CD14-positive monocyte (primary cell): ENCODE measurements at regions of chr1 and their contacts with region 1.

Region 1: GRCh38 chr1:236103646-236104218 is 38.6 kb upstream of the GPR137B start:
- DNase-seq: peak; percentile 50 to 58 (median 56)
- H3K4me3 ChIP-seq: no peak overlapping the region
- H3K4me3 Mint-ChIP-seq: peak overlapping the region in 1 of 2 donors; percentile 36
- H3K27ac ChIP-seq: no peak overlapping the region
- H3K27ac Mint-ChIP-seq: peak overlapping the region in 1 of 7 donors; percentile 14
- H3K4me1 ChIP-seq: peaks cover 0 to 2% of the 10 kb centered on the region in 2 donors
- H3K4me1 Mint-ChIP-seq: peaks cover 4% of the 10 kb centered on the region
- H3K27me3 ChIP-seq: no peaks in the 10 kb centered on the region
- H3K27me3 Mint-ChIP-seq: peaks cover 0 to 2% (median 2%) of the 10 kb centered on the region in 3 donors
- CTCF ChIP-seq: peak; percentile 82

Region 2: DNA sequence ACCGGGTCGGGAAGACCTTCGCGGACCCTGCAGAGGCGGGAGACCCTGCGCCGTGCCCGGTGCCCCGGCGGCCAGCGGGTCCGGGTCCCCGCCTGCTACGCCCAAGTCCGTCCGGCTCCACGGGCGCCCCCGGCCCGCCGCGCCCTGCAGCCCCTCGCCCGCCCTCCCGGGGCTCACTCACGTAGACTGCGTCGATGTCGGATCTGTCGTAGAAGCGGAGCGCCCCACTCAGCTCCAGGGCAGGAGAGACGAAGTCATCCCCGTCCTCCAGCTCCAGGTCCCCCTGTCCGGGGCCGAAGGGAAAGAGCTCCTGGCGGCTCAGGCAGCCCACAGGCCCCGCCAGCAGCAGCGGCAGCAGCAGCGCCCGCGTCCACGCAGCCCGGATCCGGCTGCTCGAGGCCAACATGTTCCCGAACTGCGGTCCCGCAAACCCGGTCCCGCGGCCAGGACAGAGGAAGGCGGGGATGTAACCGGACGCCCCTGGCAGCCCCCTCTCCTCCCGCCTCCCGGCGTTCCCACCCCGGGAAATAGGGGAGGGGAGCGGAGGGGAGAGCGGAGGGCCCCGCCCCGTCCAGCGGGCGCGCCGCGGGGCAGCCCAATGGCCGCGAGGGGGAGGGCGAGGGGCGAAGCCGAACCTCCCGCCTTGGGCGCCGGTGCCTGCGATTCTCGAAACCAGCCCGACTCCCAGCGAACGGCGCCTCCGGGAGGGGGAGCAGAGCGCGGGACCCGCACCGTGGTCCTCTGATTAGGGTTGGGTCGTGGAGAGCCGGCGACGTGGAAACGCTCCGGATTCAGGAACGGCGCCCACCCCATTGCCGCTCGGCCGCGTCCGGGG is 38.8 kb before region 1 on chr1 and contains the start of gene NID1:
- intact Hi-C with region 1: loop called in 1 of 2 experiments (anchors 5 kb)
- DNase-seq: peak; percentile 44 to 56 (median 51)
- H3K4me3 ChIP-seq: peak within 1 kb of the TSS; percentile 67 to 82 (median 68)
- H3K4me3 Mint-ChIP-seq: peak within 1 kb of the TSS; percentile 87 to 92
- H3K27ac ChIP-seq: peak within 1 kb of the TSS; percentile 31 to 88
- H3K27ac Mint-ChIP-seq: peak within 1 kb of the TSS in 6 of 7 donors; percentile 14 to 91 (median 72)
- H3K4me1 ChIP-seq: peaks cover 37 to 52% of the 10 kb centered on the region in 2 donors
- H3K4me1 Mint-ChIP-seq: peaks cover 35% of the 10 kb centered on the region
- H3K27me3 ChIP-seq: peaks cover 4 to 13% of the 10 kb centered on the region in 2 donors
- H3K27me3 Mint-ChIP-seq: peaks cover 21 to 43% (median 36%) of the 10 kb centered on the region in 3 donors
- CTCF ChIP-seq: peak; percentile 52
- polyA plus RNA-seq, gene NID1: 6.8 to 19.7 (median 14.4) TPM

Region 3: DNA sequence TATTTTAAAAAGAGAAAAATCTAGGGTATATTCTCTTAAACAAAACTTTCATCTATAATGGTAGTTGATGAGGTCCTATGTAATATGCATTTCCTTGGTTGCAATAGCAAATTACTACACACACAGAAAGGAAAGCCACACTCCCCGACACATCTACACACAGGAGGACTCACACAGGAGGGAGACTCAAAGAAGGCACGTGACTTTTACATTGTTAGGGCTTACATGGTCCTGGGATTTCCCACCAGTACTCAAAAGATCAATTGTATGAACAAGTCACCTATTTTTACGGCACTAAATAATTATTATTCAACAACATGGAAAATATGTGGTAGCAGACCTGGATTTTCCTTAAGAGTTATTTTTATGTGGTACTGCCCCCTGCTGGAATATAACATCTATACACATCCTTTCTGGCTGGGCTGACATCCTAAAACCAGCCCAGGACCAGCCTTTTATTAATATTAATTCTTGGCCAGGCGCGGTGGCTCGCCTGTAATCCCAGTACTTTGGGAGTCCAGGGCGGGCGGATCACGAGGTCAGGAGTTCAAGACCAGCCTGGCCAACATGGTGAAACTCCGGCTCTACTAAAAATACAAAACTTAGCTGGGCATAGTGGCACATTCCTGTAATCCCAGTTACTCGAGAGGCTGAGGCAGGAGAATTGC is 386.1 kb after region 1 on chr1:
- intact Hi-C with region 1: loop called (anchors 2 to 5 kb)
- DNase-seq: peak; percentile 17 to 48 (median 39)
- H3K4me3 ChIP-seq: no peak overlapping the region
- H3K4me3 Mint-ChIP-seq: no peak overlapping the region
- H3K27ac ChIP-seq: no peak overlapping the region
- H3K27ac Mint-ChIP-seq: no peak overlapping the region
- H3K4me1 ChIP-seq: peaks cover 11 to 12% of the 10 kb centered on the region in 2 donors
- H3K4me1 Mint-ChIP-seq: peaks cover 14% of the 10 kb centered on the region
- H3K27me3 ChIP-seq: no peaks in the 10 kb centered on the region
- H3K27me3 Mint-ChIP-seq: peaks cover 6 to 15% (median 11%) of the 10 kb centered on the region in 3 donors
- CTCF ChIP-seq: peak; percentile 79

Region 4: GRCh38 chr1:236868625-236869467 is 765.1 kb after region 1 on chr1:
- intact Hi-C with region 1: loop called in 1 of 2 experiments (anchors 10 kb)
- DNase-seq: peak; percentile 50 to 66 (median 63)
- H3K4me3 ChIP-seq: no peak overlapping the region
- H3K4me3 Mint-ChIP-seq: no peak overlapping the region
- H3K27ac ChIP-seq: peak overlapping the region in 1 of 2 donors; percentile 80
- H3K27ac Mint-ChIP-seq: peak overlapping the region in 4 of 7 donors; percentile 90 to 96 (median 93)
- H3K4me1 ChIP-seq: peaks cover 31 to 34% of the 10 kb centered on the region in 2 donors
- H3K4me1 Mint-ChIP-seq: peaks cover 34% of the 10 kb centered on the region
- H3K27me3 ChIP-seq: no peaks in the 10 kb centered on the region
- H3K27me3 Mint-ChIP-seq: no peaks in the 10 kb centered on the region
- CTCF ChIP-seq: peak; percentile 99

Region 5: DNA sequence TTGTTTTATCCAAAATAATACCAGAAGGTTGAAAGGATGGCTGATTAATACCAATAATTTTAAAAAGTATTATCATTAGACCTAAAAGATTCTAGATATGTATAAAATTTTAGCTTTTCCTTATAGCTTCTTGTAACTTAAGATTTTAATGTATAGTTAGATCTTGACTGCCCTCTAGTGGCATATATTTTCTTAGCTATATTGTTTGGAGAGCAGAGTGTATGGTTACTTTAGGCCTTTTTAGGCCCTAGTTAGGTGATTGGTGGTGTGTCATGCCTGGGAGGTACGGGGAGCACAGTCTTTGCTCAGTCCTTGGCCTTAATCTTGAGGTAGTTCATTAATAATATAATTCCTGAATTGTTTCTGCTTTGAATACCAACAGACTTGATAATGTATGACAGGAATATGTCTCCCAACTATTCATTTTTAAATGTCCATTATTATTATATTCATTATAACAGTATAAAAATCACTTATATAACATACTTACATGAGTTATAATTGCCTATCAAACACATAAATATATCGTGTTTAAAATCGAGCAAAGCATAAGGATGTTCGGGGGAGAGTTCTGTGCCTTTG is 1458.6 kb after region 1 on chr1:
- intact Hi-C with region 1: loop called in 1 of 2 experiments (anchors 5 kb)
- DNase-seq: peak in 2 of 3 donors; percentile 14 to 33
- H3K4me3 ChIP-seq: no peak overlapping the region
- H3K4me3 Mint-ChIP-seq: no peak overlapping the region
- H3K27ac ChIP-seq: no peak overlapping the region
- H3K27ac Mint-ChIP-seq: no peak overlapping the region
- H3K4me1 ChIP-seq: no peaks in the 10 kb centered on the region
- H3K4me1 Mint-ChIP-seq: no peaks in the 10 kb centered on the region
- H3K27me3 ChIP-seq: no peaks in the 10 kb centered on the region
- H3K27me3 Mint-ChIP-seq: peaks cover 0 to 2% (median 0%) of the 10 kb centered on the region in 3 donors
- CTCF ChIP-seq: peak; percentile 73